ENCODE measurements at regions of chr6 and their contacts with region 1.

Region 1: GRCh38 chr6:11585426-11586016 is 48.0 kb downstream of the TMEM170B start:
- DNase-seq: no peak
- ATAC-seq: no peak
- H3K4me3 Mint-ChIP-seq: no peak overlapping the region
- H3K27ac Mint-ChIP-seq: no peak overlapping the region
- H3K4me1 Mint-ChIP-seq: no peaks in the 10 kb centered on the region
- H3K27me3 Mint-ChIP-seq: peaks cover 2% of the 10 kb centered on the region

Region 2: DNA sequence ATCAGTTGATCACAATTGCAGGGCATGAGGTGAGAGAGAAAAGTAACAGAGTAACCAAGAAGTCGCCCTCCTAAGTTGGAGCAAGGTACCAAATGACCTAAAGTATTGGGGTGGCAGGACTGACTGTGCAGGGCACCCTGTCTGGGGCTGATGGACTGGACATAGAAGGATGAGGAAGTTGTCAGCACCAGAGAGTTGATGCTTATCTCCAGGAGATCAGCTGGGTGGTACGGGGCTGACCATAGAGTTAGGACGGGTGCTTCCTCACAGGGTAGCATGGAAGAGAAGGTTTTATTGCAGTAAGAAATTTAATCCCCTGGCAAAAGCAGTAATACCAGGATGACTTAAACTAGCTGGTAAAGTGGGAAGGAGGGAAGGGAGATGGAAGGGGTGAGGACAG is 18.7 kb after region 1 on chr6:
- CTCF ChIA-PET with region 1: interaction called, 10 read pairs
- POLR2A ChIA-PET with region 1: no interaction called
- intact Hi-C with region 1: no loop called
- DNase-seq: no peak
- ATAC-seq: no peak
- H3K4me3 Mint-ChIP-seq: no peak overlapping the region
- H3K27ac Mint-ChIP-seq: no peak overlapping the region
- H3K4me1 Mint-ChIP-seq: no peaks in the 10 kb centered on the region
- H3K27me3 Mint-ChIP-seq: peaks cover 9% of the 10 kb centered on the region

Region 3: GRCh38 chr6:12233693-12234571 is 648.4 kb after region 1 on chr6:
- CTCF ChIA-PET with region 1: no interaction called
- POLR2A ChIA-PET with region 1: no interaction called
- intact Hi-C with region 1: loop called (anchors 1 to 2 kb)
- DNase-seq: peak; percentile 43
- ATAC-seq: peak; percentile 93
- H3K4me3 Mint-ChIP-seq: no peak overlapping the region
- H3K27ac Mint-ChIP-seq: no peak overlapping the region
- H3K4me1 Mint-ChIP-seq: peaks cover 40% of the 10 kb centered on the region
- H3K27me3 Mint-ChIP-seq: no peaks in the 10 kb centered on the region

Region 4: GRCh38 chr6:12605888-12606345 is 1020.4 kb after region 1 on chr6:
- CTCF ChIA-PET with region 1: interaction called, 7 read pairs
- POLR2A ChIA-PET with region 1: no interaction called
- intact Hi-C with region 1: loop called (anchors 1 kb)
- DNase-seq: peak; percentile 68
- ATAC-seq: peak; percentile 81
- H3K4me3 Mint-ChIP-seq: no peak overlapping the region
- H3K27ac Mint-ChIP-seq: no peak overlapping the region
- H3K4me1 Mint-ChIP-seq: peaks cover 7% of the 10 kb centered on the region
- H3K27me3 Mint-ChIP-seq: peaks cover 22% of the 10 kb centered on the region

Region 5: GRCh38 chr6:12890171-12890790 is 1304.8 kb after region 1 on chr6:
- CTCF ChIA-PET with region 1: no interaction called
- POLR2A ChIA-PET with region 1: no interaction called
- intact Hi-C with region 1: loop called (anchors 5 kb)
- DNase-seq: peak; percentile 50
- ATAC-seq: no peak
- H3K4me3 Mint-ChIP-seq: no peak overlapping the region
- H3K27ac Mint-ChIP-seq: no peak overlapping the region
- H3K4me1 Mint-ChIP-seq: no peaks in the 10 kb centered on the region
- H3K27me3 Mint-ChIP-seq: peaks cover 3% of the 10 kb centered on the region